Caco-2 (cell line): ENCODE measurements at regions of chr14 and their contacts with region 1.

Region 1: DNA sequence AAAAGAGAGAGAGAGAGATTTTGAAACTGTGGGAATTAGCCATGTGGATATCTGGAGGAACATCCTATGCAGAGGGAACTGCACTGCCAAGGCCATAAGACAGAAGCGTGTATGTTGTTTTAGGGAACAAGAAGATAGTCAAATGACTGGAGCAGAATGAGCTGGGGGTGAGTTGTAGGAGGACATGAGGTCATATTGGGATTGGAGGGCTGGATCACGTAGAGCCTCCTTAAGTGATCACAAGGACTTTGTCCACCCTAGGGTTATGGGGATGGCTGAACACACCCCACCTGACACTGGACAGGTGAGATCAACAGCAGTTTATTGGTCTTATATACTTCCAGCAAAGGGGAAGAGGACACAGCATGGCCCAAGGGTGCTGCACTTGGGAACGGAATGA is 8.2 kb upstream of the CGRRF1 start:
- DNase-seq: no peak
- H3K4me3 ChIP-seq: no peak overlapping the region
- H3K4me3 Mint-ChIP-seq: no peak overlapping the region
- H3K27ac Mint-ChIP-seq: no peak overlapping the region
- H3K4me1 ChIP-seq: peaks cover 11% of the 10 kb centered on the region
- H3K4me1 Mint-ChIP-seq: peaks cover 9% of the 10 kb centered on the region
- H3K27me3 ChIP-seq: no peaks in the 10 kb centered on the region
- H3K27me3 Mint-ChIP-seq: no peaks in the 10 kb centered on the region
- CTCF ChIP-seq: no peak

Region 2: DNA sequence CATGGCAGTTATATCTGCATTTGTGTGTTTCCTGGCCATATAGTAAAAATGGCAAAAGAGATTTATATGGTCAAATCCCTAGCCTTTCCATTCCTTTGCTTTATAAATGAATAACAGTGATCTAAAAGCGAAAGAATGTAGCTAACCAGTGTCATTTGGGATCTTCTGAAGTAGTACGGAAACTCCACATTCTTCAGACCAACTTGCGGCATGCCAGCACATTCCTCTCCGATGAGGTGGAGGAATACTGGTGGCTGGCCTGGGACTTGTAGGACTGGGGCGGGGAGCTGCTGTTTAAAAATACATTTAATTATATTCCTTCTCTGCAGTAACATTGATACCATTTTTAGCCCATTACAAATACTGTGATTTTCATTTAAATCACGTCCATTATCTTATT is 150.7 kb after region 1 on chr14:
- CTCF ChIA-PET with region 1: interaction called, 13 read pairs
- POLR2A ChIA-PET with region 1: no interaction called
- intact Hi-C with region 1: no loop called
- DNase-seq: peak; percentile 76 to 85
- H3K4me3 ChIP-seq: 0 out of 2 replicates have a peak overlapping the region, but pooled peaks have one; percentile 4
- H3K4me3 Mint-ChIP-seq: peak overlapping the region; percentile 52
- H3K27ac Mint-ChIP-seq: peak overlapping the region; percentile 66
- H3K4me1 ChIP-seq: peaks cover 96% of the 10 kb centered on the region
- H3K4me1 Mint-ChIP-seq: peaks cover 44% of the 10 kb centered on the region
- H3K27me3 ChIP-seq: no peaks in the 10 kb centered on the region
- H3K27me3 Mint-ChIP-seq: no peaks in the 10 kb centered on the region
- CTCF ChIP-seq: no peak

Region 3: DNA sequence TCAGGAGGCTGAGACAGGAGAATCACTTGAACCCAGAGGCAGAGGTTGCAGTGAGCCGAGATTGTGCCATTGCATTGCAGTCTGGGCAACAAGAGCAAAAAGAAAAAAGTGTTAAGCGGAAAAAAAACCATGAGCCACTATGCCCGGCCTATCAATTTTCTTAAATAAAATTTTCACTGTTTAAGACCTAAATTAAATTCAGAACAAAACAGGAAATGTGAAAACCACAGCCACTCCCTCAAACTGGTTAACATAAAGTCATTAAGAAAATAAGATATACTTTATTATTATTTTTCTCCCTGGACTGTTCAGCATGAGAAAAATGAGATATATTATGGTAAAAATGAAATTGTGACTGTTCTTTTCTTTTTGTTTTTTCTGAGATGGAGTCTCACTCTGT is 445.8 kb after region 1 on chr14:
- CTCF ChIA-PET with region 1: no interaction called
- POLR2A ChIA-PET with region 1: no interaction called
- intact Hi-C with region 1: no loop called
- DNase-seq: no peak
- H3K4me3 ChIP-seq: no peak overlapping the region
- H3K4me3 Mint-ChIP-seq: no peak overlapping the region
- H3K27ac Mint-ChIP-seq: no peak overlapping the region
- H3K4me1 ChIP-seq: no peaks in the 10 kb centered on the region
- H3K4me1 Mint-ChIP-seq: no peaks in the 10 kb centered on the region
- H3K27me3 ChIP-seq: no peaks in the 10 kb centered on the region
- H3K27me3 Mint-ChIP-seq: no peaks in the 10 kb centered on the region
- CTCF ChIP-seq: no peak